MCF 10A (cell line): ENCODE measurements at regions of chr1 and their contacts with region 1.

Region 1: DNA sequence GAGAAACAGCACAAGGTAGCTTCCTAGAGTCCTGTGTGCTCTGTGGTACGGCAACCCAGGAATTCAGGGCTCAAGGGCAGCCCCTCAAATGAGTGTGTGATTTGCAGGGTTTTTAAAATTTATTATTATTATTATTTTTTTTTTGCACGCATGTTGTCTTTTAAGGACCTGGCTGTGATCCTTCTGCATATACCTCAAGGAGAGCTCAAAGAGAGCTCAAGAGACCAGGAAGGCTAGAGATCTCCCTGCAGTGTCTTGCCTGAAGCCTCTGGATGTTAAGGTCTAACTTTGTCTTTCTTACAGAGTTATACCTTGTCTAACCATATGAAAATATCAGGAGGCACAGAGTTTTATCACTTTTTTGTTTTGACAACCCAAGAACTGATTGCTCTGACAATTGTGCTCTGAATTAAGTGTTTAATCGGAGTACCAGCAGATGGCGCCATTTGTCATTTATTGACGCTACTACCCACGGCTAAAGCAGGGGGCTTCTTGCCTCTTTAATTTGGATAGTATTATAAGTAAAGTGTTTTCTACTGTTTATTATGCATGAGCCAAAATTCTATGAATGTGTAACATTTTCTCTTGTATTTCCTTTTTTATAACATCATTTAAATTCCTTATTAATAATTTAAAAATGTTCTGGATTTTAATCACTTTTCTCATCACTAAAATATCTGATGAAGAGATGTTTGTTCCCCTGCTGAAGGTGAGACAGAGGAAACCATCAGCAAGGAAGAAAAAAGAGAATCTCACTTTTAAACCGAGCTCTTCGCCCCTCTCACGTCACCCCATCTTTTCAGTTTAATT is 35.8 kb upstream of the LMO4 start:
- DNase-seq: peak; percentile 69
- H3K4me3 Mint-ChIP-seq: no peak overlapping the region
- H3K27ac Mint-ChIP-seq: no peak overlapping the region
- H3K4me1 Mint-ChIP-seq: no peaks in the 10 kb centered on the region
- H3K27me3 Mint-ChIP-seq: peaks cover 25% of the 10 kb centered on the region
- CTCF ChIP-seq: peak; percentile 69

Region 2: DNA sequence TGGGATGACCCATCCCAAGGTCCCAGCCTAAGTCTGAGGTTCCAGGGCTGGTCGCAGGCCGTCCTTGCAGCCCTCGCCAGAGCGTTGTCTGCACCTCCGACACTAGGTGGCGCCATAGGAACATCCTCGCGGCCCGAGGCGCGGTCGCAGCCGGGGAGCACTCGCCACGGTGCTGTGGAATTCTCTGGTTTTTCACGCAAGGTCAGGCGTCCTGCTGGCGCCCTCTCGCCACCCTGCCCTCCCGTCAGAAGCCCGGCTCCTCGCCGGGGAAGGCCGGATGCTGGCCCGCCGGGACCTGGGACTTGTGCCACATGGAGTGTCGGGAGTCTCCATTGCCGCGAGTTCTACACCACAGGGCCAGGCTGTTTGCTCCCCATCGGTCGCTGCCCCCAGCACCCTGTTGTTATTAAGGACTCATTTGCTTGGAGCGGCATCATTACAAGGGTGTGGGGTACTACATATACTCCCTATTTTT is 161.0 kb before region 1 on chr1:
- CTCF ChIA-PET with region 1: interaction called, 8 read pairs
- POLR2A ChIA-PET with region 1: no interaction called
- intact Hi-C with region 1: loop called (anchors 1 kb)
- DNase-seq: peak; percentile 72
- H3K4me3 Mint-ChIP-seq: peak overlapping the region; percentile 66
- H3K27ac Mint-ChIP-seq: no peak overlapping the region
- H3K4me1 Mint-ChIP-seq: peaks cover 5% of the 10 kb centered on the region
- H3K27me3 Mint-ChIP-seq: no peaks in the 10 kb centered on the region
- CTCF ChIP-seq: peak; percentile 91

Region 3: DNA sequence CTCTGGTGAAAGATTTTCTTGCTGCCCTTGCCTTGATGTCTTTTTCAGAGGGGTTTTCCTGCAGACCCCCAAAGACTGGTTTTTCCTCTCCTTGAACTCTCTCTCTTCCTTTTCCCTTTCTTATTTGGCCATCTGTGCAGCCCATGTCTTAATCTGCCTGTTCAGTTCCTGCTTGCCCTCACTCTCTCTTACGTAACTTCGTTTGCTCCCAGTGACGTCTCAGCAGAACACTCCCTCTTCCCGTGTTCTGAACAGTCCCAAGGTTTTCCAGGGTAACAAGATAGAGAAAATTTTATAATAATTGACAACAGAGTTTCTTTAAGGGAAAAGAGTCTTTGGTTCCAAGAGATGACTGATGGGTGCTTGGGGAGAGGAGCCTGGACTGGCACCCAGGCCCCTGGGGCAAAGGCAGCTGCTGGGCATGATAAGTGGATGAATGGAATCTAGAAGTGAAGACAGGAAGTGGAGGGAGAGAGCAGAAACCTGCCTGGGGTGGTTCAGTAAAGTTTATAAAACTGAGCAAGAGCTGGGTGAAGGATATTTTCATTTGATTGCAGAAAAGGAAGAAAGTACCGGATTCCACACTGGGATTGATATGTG is 73.2 kb before region 1 on chr1:
- CTCF ChIA-PET with region 1: interaction called, 11 read pairs
- POLR2A ChIA-PET with region 1: no interaction called
- intact Hi-C with region 1: no loop called
- DNase-seq: peak; percentile 59
- H3K4me3 Mint-ChIP-seq: no peak overlapping the region
- H3K27ac Mint-ChIP-seq: no peak overlapping the region
- H3K4me1 Mint-ChIP-seq: peaks cover 14% of the 10 kb centered on the region
- H3K27me3 Mint-ChIP-seq: no peaks in the 10 kb centered on the region
- CTCF ChIP-seq: no peak

Region 4: GRCh38 chr1:87305762-87306161 is 12.9 kb after region 1 on chr1:
- CTCF ChIA-PET with region 1: interaction called, 58 read pairs
- POLR2A ChIA-PET with region 1: no interaction called
- intact Hi-C with region 1: no loop called
- DNase-seq: no peak
- H3K4me3 Mint-ChIP-seq: no peak overlapping the region
- H3K27ac Mint-ChIP-seq: no peak overlapping the region
- H3K4me1 Mint-ChIP-seq: no peaks in the 10 kb centered on the region
- H3K27me3 Mint-ChIP-seq: peaks cover 21% of the 10 kb centered on the region
- CTCF ChIP-seq: no peak

Region 5: DNA sequence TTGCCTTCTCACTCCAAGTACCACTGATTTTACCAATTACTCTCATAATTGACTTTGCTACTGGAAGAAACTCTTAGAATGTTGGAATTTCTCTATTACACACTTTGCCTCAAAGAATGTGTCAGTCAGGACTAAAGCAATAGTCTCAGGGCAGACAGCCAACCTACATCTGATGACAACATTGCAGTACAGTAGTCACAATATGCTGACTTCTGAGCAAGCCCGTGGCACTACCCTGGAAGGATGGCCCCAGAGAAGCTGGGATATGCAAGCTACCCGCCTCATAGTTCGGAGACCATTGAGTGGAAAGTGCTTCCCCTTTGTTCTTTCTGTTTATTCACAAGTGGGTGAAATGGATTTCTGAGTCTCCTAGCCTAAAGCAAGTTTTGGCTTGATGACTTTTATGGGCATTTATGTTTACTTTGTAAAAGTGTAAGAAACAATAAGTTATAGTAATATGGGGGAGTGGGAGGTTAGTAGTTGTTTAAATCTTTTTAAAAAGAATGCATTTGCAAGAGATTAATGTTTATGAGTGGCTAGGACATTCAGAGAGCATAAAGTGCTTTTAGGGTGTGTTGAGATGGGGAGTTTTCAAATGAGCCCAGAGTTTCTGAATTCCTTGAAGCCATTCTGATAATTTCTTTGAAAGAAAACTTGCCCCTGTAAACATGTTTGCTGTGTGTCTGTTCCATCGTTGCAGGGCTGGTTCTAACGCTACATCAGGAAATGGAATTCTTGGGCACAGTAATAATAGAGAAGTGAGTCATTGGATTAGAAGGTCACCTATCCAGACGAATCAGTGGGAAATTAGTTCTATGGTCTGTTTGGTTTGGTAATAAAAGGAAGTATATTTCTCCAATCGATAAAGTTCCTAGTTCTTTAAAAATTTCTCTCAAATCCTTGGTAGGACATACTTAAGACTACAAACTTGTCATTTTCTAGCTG is 99.6 kb after region 1 on chr1:
- CTCF ChIA-PET with region 1: no interaction called
- POLR2A ChIA-PET with region 1: no interaction called
- intact Hi-C with region 1: no loop called
- DNase-seq: peak; percentile 83
- H3K4me3 Mint-ChIP-seq: no peak overlapping the region
- H3K27ac Mint-ChIP-seq: peak overlapping the region; percentile 28
- H3K4me1 Mint-ChIP-seq: peaks cover 18% of the 10 kb centered on the region
- H3K27me3 Mint-ChIP-seq: no peaks in the 10 kb centered on the region
- CTCF ChIP-seq: no peak

Region 6: DNA sequence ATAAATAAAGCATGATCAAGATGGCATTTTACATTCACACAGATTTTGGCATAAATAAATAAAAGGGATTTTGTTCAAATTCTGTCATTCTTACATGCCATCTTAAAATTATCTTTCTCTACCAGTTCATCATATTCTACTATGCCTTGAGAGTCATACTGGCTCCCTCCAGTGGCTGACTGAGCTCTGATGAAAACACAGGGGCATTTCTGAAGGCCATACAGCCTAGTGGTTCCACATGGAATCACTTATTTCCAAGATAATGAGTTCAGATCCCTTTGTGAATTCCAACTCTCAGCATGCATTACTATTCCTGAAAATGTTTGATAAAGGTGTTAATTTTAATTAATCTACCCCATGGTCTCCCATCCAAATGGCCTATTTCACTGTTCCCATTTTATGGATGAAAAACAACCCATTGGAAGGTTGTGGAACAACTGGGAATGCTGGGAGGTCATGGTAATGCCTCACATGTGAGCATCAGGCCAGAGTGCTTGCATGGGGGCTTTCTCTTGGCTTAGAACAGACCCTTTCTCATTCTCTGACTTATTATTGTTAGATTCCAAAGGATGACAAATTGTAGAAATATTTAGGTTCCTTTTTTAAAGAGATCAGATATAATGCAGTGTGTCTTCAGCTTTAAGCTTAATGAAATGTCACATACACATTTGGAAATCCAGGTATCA is 768.7 kb after region 1 on chr1:
- CTCF ChIA-PET with region 1: interaction called, 7 read pairs
- POLR2A ChIA-PET with region 1: no interaction called
- intact Hi-C with region 1: loop called (anchors 1 kb)
- DNase-seq: peak; percentile 70
- H3K4me3 Mint-ChIP-seq: no peak overlapping the region
- H3K27ac Mint-ChIP-seq: no peak overlapping the region
- H3K4me1 Mint-ChIP-seq: peaks cover 9% of the 10 kb centered on the region
- H3K27me3 Mint-ChIP-seq: no peaks in the 10 kb centered on the region
- CTCF ChIP-seq: peak; percentile 81

Region 7: DNA sequence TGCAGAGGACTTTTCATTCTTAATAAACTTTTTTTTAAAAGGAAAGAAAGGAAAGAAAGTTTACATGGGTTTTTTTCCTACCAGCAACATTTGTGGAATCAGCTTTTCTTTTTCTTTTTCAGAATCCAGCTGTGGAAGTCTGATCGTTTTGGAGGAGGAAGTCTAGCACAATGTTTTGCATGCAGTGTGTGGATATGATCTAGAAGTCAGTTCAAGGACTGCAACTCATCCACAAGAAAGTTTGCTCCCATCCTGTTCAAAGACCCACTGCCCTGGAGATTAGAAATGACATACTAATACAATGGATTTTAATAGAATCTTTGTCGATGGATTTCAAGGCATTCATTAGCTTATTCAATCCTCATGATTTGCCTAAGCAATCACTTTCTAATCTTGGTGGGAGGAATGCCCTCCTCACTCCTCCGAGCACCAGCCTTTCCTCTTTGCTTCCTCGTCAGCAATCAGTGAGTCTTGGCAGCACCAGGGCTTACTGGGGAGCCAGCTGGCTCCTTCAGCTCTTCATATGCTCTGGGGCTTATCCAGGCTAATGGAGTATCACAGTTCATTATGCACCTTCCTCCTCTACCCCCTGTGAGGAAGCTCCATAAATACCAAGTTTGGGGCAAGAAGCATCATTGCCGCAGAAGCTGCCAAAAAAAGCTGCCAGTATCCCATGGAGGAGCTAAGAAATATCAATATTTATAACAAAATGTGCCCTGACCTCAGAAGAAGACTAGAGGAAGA is 998.9 kb after region 1 on chr1:
- CTCF ChIA-PET with region 1: interaction called, 14 read pairs
- POLR2A ChIA-PET with region 1: no interaction called
- intact Hi-C with region 1: no loop called
- DNase-seq: no peak
- H3K4me3 Mint-ChIP-seq: no peak overlapping the region
- H3K27ac Mint-ChIP-seq: no peak overlapping the region
- H3K4me1 Mint-ChIP-seq: no peaks in the 10 kb centered on the region
- H3K27me3 Mint-ChIP-seq: peaks cover 21% of the 10 kb centered on the region
- CTCF ChIP-seq: no peak

Region 8: GRCh38 chr1:88302843-88303486 is 1010.1 kb after region 1 on chr1:
- CTCF ChIA-PET with region 1: interaction called, 16 read pairs
- POLR2A ChIA-PET with region 1: no interaction called
- intact Hi-C with region 1: loop called (anchors 5 kb)
- DNase-seq: peak; percentile 29
- H3K4me3 Mint-ChIP-seq: no peak overlapping the region
- H3K27ac Mint-ChIP-seq: no peak overlapping the region
- H3K4me1 Mint-ChIP-seq: no peaks in the 10 kb centered on the region
- H3K27me3 Mint-ChIP-seq: peaks cover 27% of the 10 kb centered on the region
- CTCF ChIP-seq: peak; percentile 40